Colonic mucosa (tissue), 4 donors: ENCODE measurements at regions of chr5 and their contacts with region 1.

Region 1: GRCh38 chr5:98969400-98969799 is 40.6 kb upstream of the CHD1 start:
- DNase-seq: no peak
- H3K4me3 ChIP-seq: no peak overlapping the region
- H3K27ac ChIP-seq: no peak overlapping the region
- H3K4me1 ChIP-seq: no peaks in the 10 kb centered on the region
- H3K27me3 ChIP-seq: no peaks in the 10 kb centered on the region
- CTCF ChIP-seq: no peak

Region 2: DNA sequence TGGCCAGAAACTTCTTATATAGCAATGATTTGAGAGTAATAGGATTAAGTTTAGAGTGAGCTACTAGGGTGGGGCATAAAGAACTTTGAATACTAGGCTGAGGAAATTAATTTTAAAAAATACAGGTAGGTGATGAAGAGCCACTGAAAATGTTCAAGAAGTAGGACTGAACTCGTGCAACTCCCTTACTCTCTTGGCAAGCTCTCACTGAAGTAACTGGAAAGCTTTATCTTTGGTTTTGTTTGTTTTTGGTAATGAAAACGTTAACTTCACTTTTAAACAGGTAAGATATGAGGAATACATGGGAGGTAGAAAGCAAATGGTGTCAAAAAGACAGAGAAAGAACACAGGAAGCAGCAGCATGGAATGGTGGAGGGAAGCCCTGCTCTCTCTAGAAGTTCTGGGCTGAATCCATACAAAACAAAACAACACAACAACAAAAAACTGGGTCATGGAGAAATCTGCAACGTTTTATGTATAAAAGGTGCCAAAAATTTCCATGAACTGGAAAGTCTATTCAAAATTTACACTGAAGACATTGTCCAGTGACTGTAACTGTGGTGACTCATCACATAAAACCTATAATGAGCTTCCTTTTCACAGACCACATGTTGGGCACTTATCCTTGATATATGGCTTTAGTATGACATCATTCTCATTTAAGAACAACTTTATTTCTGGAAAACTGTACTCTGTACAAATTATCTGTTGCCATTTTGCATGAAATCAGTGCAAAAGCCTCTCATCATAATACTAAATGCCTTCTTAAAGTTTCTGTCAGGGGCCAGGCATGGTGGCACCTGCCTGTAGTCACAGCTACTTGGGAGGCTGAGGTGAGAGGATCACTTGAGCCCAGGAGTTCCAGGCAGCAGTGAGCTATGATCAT is 50.7 kb after region 1 on chr5:
- intact Hi-C with region 1: loop called (anchors 10 kb)
- DNase-seq: peak; percentile 31
- H3K4me3 ChIP-seq: no peak overlapping the region
- H3K27ac ChIP-seq: peak overlapping the region; percentile 66
- H3K4me1 ChIP-seq: peaks cover 4% of the 10 kb centered on the region
- H3K27me3 ChIP-seq: no peaks in the 10 kb centered on the region
- CTCF ChIP-seq: no peak